GM10248 (cell line): ENCODE measurements at regions of chr10 and their contacts with region 1.

Region 1: DNA sequence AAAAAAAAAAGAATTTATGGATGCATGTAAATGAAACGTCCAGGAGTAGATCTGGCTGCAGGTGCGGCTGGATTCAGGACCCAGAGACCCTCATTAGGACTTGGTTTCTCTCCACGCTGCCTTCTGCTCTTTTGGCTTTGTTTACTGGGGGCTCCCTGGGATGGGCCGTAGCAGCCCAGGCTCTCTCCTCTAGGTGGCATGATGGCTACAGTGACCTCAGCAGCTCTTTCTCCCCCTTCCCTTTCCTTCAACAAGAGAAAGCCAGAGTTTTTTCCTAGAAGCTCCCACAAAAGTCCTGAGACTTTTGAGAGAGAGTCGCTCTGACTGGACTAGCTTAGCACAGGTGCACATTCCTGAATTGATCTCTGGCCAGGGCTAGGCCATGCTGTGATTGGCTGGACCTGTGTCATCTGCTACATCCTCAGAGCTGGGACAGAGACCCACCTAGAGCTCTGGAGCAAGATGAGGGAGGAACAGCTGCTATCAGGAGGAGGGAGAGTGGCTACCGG is 67.8 kb upstream of the PDCD4 start:
- DNase-seq: peak; percentile 70
- CTCF ChIP-seq: peak; percentile 83

Region 2: GRCh38 chr10:110746254-110746826 is 57.5 kb before region 1 on chr10:
- CTCF ChIA-PET with region 1: interaction called, 17 read pairs
- POLR2A ChIA-PET with region 1: no interaction called
- DNase-seq: peak; percentile 45
- CTCF ChIP-seq: peak; percentile 45

Region 3: DNA sequence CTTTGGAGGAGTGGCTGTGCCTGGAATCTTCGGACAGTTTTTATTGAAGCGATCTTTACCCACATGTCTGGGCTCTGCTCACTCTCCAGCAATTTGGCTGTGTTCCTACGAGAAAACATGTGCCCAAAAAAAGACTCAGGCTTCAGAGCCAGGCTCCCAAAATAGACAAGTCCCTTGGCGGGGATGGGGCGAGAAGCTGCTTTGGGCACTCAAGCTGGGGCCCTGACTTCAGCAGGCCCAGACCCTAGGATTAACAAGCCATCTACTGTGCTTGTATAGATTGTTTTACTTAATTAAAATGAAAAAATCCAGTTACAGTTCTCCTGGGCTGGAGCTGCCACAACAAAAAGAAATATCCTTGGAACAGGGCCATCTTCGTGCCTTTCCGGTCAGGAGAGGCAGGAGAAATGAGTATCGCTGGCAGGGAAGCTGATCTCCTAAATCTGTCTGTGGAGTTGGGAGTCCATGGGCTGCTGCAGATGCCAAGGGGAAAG is 16.5 kb after region 1 on chr10:
- CTCF ChIA-PET with region 1: interaction called, 55 read pairs
- POLR2A ChIA-PET with region 1: no interaction called
- DNase-seq: no peak
- CTCF ChIP-seq: no peak

Region 4: GRCh38 chr10:110834629-110835301 is 30.9 kb after region 1 on chr10:
- CTCF ChIA-PET with region 1: interaction called, 10 read pairs
- POLR2A ChIA-PET with region 1: no interaction called
- DNase-seq: no peak
- CTCF ChIP-seq: no peak

Region 5: GRCh38 chr10:110852255-110852896 is 48.5 kb after region 1 on chr10:
- CTCF ChIA-PET with region 1: interaction called, 11 read pairs
- POLR2A ChIA-PET with region 1: no interaction called
- DNase-seq: no peak
- CTCF ChIP-seq: no peak

Region 6: GRCh38 chr10:110883924-110884323 is 80.0 kb after region 1 on chr10:
- CTCF ChIA-PET with region 1: interaction called, 10 read pairs
- POLR2A ChIA-PET with region 1: interaction called, 5 read pairs
- DNase-seq: no peak
- CTCF ChIP-seq: no peak